ENCODE measurements at regions of chr5 and their contacts with region 1.

Region 1: GRCh38 chr5:88938488-88938887 is 55.5 kb upstream of the MEF2C start:
- DNase-seq: no peak
- CTCF ChIP-seq: no peak

Region 2: GRCh38 chr5:88948746-88949600 is 10.5 kb after region 1 on chr5:
- CTCF ChIA-PET with region 1: interaction called, 12 read pairs
- POLR2A ChIA-PET with region 1: no interaction called
- DNase-seq: no peak
- CTCF ChIP-seq: no peak

Measured in GM10248 (cell line).